Activated T-helper 1 cell treated with anti-CD3 and anti-CD28 coated beads, Interleukin-12 subunit alpha, Interleukin-12 subunit beta, Interleukin-2, Interleukin-4 antibody, amounts not matched to agents 30 ng/mL and 10 ng/mL and 1 ng/mL, durations not matched to agents 14 hours and 24 hours and 36 hours (primary cell): ENCODE measurements at regions of chr13 and their contacts with region 1.

Region 1: GRCh38 chr13:85828149-85828548 is 28.9 kb upstream of the SLITRK6 start:
- DNase-seq: no peak
- H3K4me3 Mint-ChIP-seq: no peak overlapping the region
- H3K27ac Mint-ChIP-seq: no peak overlapping the region
- H3K4me1 Mint-ChIP-seq: no peaks in the 10 kb centered on the region
- H3K27me3 Mint-ChIP-seq: no peaks in the 10 kb centered on the region

Region 2: GRCh38 chr13:84896128-84896527 is 932.0 kb before region 1 on chr13:
- intact Hi-C with region 1: loop called (anchors 1 kb)
- DNase-seq: no peak
- H3K4me3 Mint-ChIP-seq: no peak overlapping the region
- H3K27ac Mint-ChIP-seq: no peak overlapping the region
- H3K4me1 Mint-ChIP-seq: no peaks in the 10 kb centered on the region
- H3K27me3 Mint-ChIP-seq: no peaks in the 10 kb centered on the region

Region 3: DNA sequence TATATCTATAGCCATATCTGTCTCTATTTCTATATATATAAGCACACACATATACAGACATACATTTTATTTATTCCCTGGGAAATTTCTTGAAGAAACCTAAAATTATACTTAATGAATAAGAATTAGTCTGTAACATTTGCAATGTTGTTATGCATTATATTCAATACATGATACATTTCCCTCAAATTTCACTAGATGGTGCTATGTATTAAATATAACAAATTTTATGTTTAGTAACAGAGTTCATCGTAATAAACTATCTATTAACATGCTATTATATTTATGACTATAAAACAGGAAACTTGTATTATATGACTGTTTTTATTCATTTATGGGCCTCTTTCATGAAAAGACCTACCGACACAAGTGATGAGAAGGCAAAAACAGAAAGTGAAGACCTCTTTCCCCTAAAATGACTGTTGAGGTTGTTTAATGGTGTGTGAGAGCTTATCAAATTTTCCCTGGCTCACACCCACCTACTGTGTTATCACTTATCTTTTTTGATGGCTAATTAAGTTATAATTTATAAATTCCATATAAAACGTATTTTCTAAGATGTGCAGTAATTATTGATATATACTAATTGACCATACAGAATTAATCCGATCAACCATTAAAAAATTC is 910.8 kb before region 1 on chr13:
- intact Hi-C with region 1: loop called (anchors 1 kb)
- DNase-seq: no peak
- H3K4me3 Mint-ChIP-seq: no peak overlapping the region
- H3K27ac Mint-ChIP-seq: no peak overlapping the region
- H3K4me1 Mint-ChIP-seq: no peaks in the 10 kb centered on the region
- H3K27me3 Mint-ChIP-seq: no peaks in the 10 kb centered on the region